ENCODE measurements at regions of chr17 and their contacts with region 1.

Region 1: GRCh38 chr17:19706791-19707727 is 9.3 kb downstream of the SLC47A2 start:
- DNase-seq: no peak
- ATAC-seq: no peak
- H3K4me3 ChIP-seq: no peak overlapping the region
- H3K27ac ChIP-seq: no peak overlapping the region
- H3K4me1 ChIP-seq: no peaks in the 10 kb centered on the region; the same call in 1 of the 2 replicates
- H3K27me3 ChIP-seq: peaks cover 23% of the 10 kb centered on the region
- CTCF ChIP-seq: no peak
- POLR2A ChIP-seq: no peak
- RAD21 ChIP-seq: no peak

Region 2: DNA sequence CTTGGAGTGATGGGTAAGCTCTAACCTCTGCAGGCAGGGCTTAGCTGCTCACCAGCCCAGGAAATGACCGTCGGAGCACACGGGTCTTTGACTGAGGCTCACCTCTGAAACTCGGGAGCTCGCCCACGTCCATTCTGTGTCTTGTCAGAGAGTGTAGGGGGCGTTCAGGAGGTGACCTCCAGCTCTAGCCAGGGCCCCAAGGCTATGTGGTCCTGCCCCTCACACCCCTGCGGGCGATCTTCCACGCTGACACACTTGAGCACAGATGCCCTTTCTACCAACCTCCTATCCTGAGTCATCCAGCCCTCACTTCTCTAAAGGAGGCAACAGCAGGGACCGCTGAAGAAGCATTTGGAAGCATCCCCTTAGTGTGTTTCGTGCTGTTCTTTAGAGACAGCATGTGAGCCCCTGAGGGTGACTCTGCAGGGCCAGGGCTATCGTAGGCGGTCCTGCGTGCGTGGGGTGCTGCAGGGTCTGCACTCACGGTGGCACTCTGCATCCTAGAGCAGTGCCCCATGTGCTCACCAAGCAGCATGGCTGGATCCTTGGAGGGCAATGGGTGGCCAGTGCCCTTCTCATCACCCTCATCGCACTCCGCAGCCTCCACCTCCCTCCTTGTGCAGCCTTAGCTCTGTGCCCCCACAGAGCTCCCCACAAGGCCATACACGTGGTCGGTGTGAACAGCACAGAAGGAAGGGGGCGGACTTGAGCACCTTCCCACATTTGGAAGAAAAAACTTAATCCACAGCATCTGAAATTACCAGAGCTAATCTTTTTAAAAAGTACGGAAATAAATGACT is 139.6 kb before region 1 on chr17:
- CTCF ChIA-PET with region 1: no interaction called
- POLR2A ChIA-PET with region 1: interaction called, 15 read pairs
- dilution Hi-C with region 1: no loop called
- in situ Hi-C with region 1: no loop called
- intact Hi-C with region 1: no loop called
- DNase-seq: no peak
- ATAC-seq: no peak
- H3K4me3 ChIP-seq: no peak overlapping the region
- H3K27ac ChIP-seq: no peak overlapping the region
- H3K4me1 ChIP-seq: no peaks in the 10 kb centered on the region
- H3K27me3 ChIP-seq: peaks cover 29% of the 10 kb centered on the region
- CTCF ChIP-seq: no peak
- POLR2A ChIP-seq: no peak
- RAD21 ChIP-seq: no peak

Region 3: GRCh38 chr17:19812407-19812806 is 105.3 kb after region 1 on chr17:
- CTCF ChIA-PET with region 1: no interaction called
- POLR2A ChIA-PET with region 1: no interaction called
- dilution Hi-C with region 1: no loop called
- in situ Hi-C with region 1: no loop called
- intact Hi-C with region 1: no loop called
- DNase-seq: peak; percentile 10
- ATAC-seq: peak; percentile 85
- H3K4me3 ChIP-seq: no peak overlapping the region
- H3K27ac ChIP-seq: no peak overlapping the region
- H3K4me1 ChIP-seq: no peaks in the 10 kb centered on the region
- H3K27me3 ChIP-seq: no peaks in the 10 kb centered on the region
- CTCF ChIP-seq: peak; percentile 31; the same call in 1 of the 2 replicates
- POLR2A ChIP-seq: no peak
- RAD21 ChIP-seq: peak; percentile 15; the same call in 1 of the 2 replicates

Measured in IMR-90 (cell line).